Activated CD4-positive, alpha-beta T cell treated with anti-CD3 and anti-CD28 coated beads for 36 hours (primary cell): ENCODE measurements at regions of chr19 and their contacts with region 1.

Region 1: DNA sequence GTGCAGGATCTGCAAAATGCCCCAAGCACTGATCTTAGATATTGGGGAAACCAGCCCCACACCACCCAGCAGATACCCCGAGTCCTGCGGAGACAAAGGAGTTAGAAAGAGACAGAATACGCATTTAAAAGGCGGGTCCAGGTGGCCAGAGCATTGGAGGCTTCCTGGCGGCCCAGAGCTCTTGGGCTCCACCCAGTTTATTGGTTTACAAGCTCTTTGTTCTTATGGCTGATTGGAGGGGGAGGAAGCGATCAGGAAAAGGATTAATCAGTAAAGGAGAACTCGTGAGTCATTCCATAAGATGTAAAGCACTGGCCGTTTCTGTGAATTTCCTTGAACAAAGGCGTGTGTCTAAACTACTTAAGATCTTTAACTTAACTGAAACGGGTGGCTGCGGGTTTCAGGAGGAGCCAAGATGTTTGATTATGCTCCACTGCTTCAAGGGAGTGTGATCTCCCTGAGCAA is 926 bp downstream of the ZNF587 start:
- DNase-seq: peak; percentile 33
- ATAC-seq: no peak
- H3K4me3 Mint-ChIP-seq: peak overlapping the region; percentile 95
- H3K27ac Mint-ChIP-seq: peak overlapping the region; percentile 97
- H3K4me1 Mint-ChIP-seq: peaks cover 23% of the 10 kb centered on the region
- H3K27me3 Mint-ChIP-seq: no peaks in the 10 kb centered on the region

Region 2: DNA sequence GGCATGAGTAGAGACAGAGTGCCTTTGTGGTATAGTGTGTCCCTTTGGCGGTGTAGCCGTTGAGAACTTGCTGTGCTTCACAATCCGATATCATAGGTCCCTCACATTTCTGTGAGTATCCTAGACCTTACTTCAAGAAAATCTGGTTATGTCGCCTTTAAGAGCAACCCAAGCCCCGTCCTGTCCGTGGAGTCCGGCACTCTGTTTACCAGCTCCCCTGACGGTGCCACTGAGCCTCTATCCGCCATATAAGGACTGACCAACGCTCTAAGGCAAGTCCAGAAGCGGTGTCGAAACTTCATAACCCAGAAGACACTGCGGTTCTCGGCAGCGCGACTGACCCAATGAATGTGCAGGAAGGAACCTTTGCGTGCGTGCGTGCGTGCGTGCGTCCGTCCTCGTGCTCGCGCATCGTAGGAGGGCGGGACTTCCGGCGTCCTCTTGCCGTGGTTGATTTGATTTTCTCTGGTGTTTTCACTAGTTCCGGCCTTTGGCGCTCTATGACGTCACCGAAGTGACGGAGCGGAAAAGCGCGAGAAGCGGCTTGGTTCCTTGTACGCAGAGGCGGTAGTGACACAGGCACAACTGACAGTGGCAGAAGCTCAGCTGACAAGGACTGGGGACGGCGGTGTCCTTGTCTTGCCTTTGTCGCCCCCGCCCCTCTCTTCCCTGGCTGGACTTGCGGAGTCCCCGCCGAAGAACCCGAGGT is 487.4 kb before region 1 on chr19 and contains the starts of genes TRAPPC2B and ZNF547:
- CTCF ChIA-PET with region 1: no interaction called
- POLR2A ChIA-PET with region 1: no interaction called
- intact Hi-C with region 1: no loop called
- DNase-seq: peak; percentile 99
- ATAC-seq: peak; percentile 98
- H3K4me3 Mint-ChIP-seq: peak within 1 kb of the TSS; percentile 86
- H3K27ac Mint-ChIP-seq: peak within 1 kb of the TSS; percentile 94
- H3K4me1 Mint-ChIP-seq: peaks cover 13% of the 10 kb centered on the region
- H3K27me3 Mint-ChIP-seq: no peaks in the 10 kb centered on the region
- total RNA-seq, gene TRAPPC2B: 3.2 to 6.1 TPM
- total RNA-seq, gene ZNF547: 1.5 to 1.7 TPM

Region 3: GRCh38 chr19:57620673-57621199 is 229.8 kb before region 1 on chr19:
- CTCF ChIA-PET with region 1: no interaction called
- POLR2A ChIA-PET with region 1: no interaction called
- intact Hi-C with region 1: no loop called
- DNase-seq: no peak
- ATAC-seq: no peak
- H3K4me3 Mint-ChIP-seq: no peak overlapping the region
- H3K27ac Mint-ChIP-seq: no peak overlapping the region
- H3K4me1 Mint-ChIP-seq: peaks cover under 1% of the 10 kb centered on the region
- H3K27me3 Mint-ChIP-seq: no peaks in the 10 kb centered on the region

Region 4: DNA sequence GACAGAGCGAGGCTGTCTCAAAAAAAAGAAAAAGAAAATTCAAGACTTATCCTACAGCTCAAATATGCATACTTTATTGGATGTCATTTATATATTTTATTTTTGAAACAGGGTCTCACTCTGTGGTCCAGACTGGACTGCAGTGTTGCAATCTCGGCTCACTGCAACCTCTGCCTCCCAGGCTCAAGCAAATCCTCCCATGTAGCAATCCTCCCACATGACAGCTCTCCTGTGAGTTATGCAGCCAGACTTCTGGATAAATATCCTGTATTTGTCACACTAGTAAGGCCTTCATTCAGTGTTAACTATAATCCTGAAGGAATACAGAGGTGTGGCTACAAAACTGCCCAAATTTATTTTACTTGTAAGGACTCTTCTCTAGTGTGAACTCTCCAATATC is 43.1 kb before region 1 on chr19:
- CTCF ChIA-PET with region 1: no interaction called
- POLR2A ChIA-PET with region 1: no interaction called
- intact Hi-C with region 1: no loop called
- DNase-seq: no peak
- ATAC-seq: no peak
- H3K4me3 Mint-ChIP-seq: no peak overlapping the region
- H3K27ac Mint-ChIP-seq: no peak overlapping the region
- H3K4me1 Mint-ChIP-seq: peaks cover 28% of the 10 kb centered on the region
- H3K27me3 Mint-ChIP-seq: no peaks in the 10 kb centered on the region

Region 5: DNA sequence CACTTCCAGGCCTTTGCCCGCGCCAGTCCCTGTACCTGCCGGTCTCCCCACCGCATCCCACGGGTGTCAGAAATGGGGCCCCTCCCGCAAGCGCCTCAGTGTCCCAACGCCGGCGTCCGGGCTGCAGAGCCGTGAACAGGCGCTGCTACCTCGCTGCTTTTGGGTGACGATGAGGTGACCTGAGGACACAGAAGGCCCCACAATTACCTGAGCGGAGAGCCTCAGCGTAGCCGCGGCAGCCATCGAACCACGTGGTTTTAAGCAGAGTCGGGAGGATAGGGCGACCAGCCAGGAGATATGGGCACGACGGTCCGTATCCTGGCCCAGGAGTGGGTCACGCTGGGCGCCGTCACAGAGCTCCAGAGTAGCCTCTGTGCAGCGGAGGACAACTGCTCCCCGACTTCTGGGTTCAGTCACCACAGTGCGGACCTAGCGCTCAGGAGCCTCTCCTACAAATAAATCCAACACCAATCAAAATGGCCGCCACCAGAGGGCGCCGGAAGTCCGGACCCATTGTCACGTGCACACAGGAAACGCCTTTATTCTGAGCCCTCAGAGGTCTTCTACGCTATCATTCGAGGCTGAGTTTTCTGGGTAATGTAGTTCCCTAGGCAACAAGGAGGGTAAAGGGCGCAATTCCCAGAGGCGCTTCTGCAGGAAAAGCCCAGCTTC is 38.1 kb after region 1 on chr19 and contains the start of gene ZNF814:
- CTCF ChIA-PET with region 1: no interaction called
- POLR2A ChIA-PET with region 1: no interaction called
- intact Hi-C with region 1: loop called in 1 of 2 experiments (anchors 5 kb)
- DNase-seq: peak; percentile 91
- ATAC-seq: peak; percentile 94
- H3K4me3 Mint-ChIP-seq: peak within 1 kb of the TSS; percentile 96
- H3K27ac Mint-ChIP-seq: peak within 1 kb of the TSS; percentile 92
- H3K4me1 Mint-ChIP-seq: peaks cover 23% of the 10 kb centered on the region
- H3K27me3 Mint-ChIP-seq: no peaks in the 10 kb centered on the region
- total RNA-seq, gene ZNF814: 24.1 to 24.5 TPM

Region 6: DNA sequence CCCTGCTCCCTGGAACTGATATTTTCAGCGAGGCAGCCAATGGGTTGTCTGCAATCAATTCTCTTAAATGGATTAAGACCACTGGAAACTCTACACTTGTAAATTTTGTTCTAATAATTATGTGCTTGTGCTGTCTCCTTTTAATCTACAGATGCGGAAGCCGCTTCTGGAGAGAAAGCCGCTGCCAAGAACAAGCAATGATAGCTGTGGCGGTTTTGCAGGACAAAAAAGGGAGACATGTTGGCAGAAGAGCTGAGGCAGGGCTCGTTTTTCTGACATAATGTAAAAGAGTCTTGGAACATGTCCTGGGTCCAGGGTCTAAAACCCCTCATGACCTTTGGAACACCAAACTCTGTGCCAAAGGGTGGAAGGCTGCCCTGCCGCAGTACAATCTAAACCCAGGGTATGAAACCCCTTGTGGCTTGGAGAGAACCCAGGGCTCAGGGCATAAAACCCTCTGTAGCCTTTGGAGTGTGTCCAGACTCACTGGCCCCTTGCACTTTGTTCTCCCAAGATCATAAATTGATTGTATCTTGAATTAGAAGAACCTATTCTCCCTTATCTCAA is 53.1 kb after region 1 on chr19:
- CTCF ChIA-PET with region 1: no interaction called
- POLR2A ChIA-PET with region 1: no interaction called
- intact Hi-C with region 1: loop called in 1 of 2 experiments (anchors 1 kb)
- DNase-seq: no peak
- ATAC-seq: no peak
- H3K4me3 Mint-ChIP-seq: no peak overlapping the region
- H3K27ac Mint-ChIP-seq: peak overlapping the region; percentile 74
- H3K4me1 Mint-ChIP-seq: peaks cover 14% of the 10 kb centered on the region
- H3K27me3 Mint-ChIP-seq: no peaks in the 10 kb centered on the region

Region 7: DNA sequence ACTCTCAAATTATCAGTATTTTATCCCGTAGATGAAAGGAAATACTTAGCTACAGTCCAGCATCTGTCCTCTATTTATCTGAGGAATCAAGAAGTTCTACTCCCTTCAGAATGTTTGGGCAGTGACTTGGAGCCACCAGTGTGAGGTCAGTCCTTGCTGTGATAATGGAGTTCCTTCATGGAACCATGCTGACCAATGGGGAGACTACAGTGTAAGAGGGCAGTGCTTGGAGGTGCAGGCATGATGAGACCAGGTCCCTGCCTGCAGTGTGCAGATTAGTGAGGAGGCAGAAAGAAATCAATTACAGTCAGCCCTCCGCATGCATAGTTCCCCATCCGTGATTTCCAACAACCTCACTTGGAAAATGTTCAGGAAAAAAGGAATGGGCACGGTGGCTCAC is 123.8 kb after region 1 on chr19 and contains the start of gene C19orf18:
- CTCF ChIA-PET with region 1: no interaction called
- POLR2A ChIA-PET with region 1: no interaction called
- intact Hi-C with region 1: no loop called
- DNase-seq: no peak
- ATAC-seq: no peak
- H3K4me3 Mint-ChIP-seq: no peak within 1 kb of the TSS
- H3K27ac Mint-ChIP-seq: no peak within 1 kb of the TSS
- H3K4me1 Mint-ChIP-seq: no peaks in the 10 kb centered on the region
- H3K27me3 Mint-ChIP-seq: no peaks in the 10 kb centered on the region
- total RNA-seq, gene C19orf18: 0.33 to 0.46 TPM